Caco-2 (cell line): ENCODE measurements at regions of chr5 and their contacts with region 1.

Region 1: DNA sequence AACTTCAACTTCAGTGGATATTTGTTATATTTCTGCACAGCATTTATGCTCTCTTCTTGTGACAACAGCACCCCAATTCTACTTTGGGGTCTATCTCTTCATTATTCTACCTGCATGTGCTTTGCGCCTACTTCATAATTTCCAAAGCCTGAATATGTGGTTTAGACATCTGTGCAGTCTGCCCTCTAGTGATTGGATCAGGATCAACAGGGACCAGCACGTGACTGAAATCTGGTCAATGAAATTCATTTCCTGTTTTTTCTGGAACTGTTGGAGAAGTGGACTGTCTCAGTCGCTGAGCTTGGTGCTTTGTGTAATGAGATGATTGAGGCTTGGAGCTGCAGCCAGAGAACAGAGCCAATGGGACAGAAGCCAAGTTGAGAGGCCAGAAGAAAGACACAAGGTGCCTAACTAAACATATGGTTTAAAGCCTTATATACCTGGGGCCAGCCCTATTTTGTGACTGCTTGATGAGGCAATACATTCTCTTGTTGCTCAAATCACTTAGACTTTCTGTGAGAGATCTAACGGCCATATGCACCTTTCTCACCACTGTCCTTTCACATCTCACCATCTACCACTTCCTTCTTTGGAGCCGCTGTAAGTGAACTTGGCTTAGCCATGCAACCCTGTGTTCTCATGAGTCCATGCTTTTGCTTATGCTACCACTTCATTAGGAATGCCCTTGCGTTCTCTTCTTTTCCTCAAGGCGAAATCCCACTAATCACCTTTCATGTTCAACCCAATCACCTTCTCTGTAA is 68.8 kb upstream of the PPP2R2B start:
- DNase-seq: peak; percentile 43 to 57
- H3K4me3 ChIP-seq: no peak overlapping the region
- H3K4me3 Mint-ChIP-seq: no peak overlapping the region
- H3K27ac Mint-ChIP-seq: no peak overlapping the region
- H3K4me1 ChIP-seq: no peaks in the 10 kb centered on the region
- H3K4me1 Mint-ChIP-seq: no peaks in the 10 kb centered on the region
- H3K27me3 ChIP-seq: no peaks in the 10 kb centered on the region
- H3K27me3 Mint-ChIP-seq: no peaks in the 10 kb centered on the region
- CTCF ChIP-seq: peak; percentile 54 to 61

Region 2: DNA sequence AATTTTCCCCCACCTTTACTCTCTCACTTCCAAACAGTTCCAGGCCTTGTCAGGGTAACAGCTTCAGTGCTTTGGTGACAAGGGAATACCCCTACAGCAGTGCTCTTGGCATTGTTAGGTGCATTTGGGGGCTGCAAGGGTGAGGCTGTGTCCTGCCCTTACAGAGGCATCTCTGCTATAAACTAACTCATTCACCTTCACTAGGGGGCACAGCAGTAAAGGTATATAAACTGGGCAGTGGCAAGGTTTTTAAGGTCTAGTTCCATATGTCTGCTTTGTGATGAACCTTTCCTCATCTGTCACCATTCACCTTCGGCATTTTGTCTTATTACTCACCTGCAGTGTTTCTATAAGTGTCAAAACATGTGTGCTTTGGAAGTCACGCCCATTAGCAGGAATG is 352.3 kb before region 1 on chr5:
- CTCF ChIA-PET with region 1: no interaction called
- POLR2A ChIA-PET with region 1: no interaction called
- intact Hi-C with region 1: loop called (anchors 1 kb)
- DNase-seq: peak in 1 of 2 experiments; percentile 24
- H3K4me3 ChIP-seq: no peak overlapping the region
- H3K4me3 Mint-ChIP-seq: no peak overlapping the region
- H3K27ac Mint-ChIP-seq: no peak overlapping the region
- H3K4me1 ChIP-seq: no peaks in the 10 kb centered on the region
- H3K4me1 Mint-ChIP-seq: no peaks in the 10 kb centered on the region
- H3K27me3 ChIP-seq: no peaks in the 10 kb centered on the region
- H3K27me3 Mint-ChIP-seq: no peaks in the 10 kb centered on the region
- CTCF ChIP-seq: peak; percentile 30 to 36

Region 3: DNA sequence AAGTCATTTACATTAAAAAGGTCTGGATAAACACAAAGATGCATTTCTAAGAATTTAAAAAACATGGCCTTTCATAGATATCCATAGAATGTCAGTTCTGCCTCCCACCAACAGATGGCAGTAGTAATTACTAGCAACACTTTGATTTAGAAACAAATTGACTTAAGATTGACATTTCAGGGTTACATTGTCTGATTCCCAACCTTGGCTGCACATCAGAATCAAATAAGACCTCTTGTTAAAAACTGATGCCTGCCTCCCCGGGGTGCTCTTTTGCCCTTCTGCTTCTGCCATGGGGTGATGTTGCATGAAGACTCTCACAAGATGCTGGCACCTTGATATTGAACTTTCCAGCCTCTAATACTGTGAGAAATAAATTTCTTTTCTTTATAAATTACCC is 285.1 kb before region 1 on chr5:
- CTCF ChIA-PET with region 1: no interaction called
- POLR2A ChIA-PET with region 1: no interaction called
- intact Hi-C with region 1: loop called (anchors 5 kb)
- DNase-seq: peak in 1 of 2 experiments; percentile 32
- H3K4me3 ChIP-seq: no peak overlapping the region
- H3K4me3 Mint-ChIP-seq: no peak overlapping the region
- H3K27ac Mint-ChIP-seq: no peak overlapping the region
- H3K4me1 ChIP-seq: no peaks in the 10 kb centered on the region
- H3K4me1 Mint-ChIP-seq: no peaks in the 10 kb centered on the region
- H3K27me3 ChIP-seq: no peaks in the 10 kb centered on the region
- H3K27me3 Mint-ChIP-seq: no peaks in the 10 kb centered on the region
- CTCF ChIP-seq: peak; percentile 60 to 66

Region 4: DNA sequence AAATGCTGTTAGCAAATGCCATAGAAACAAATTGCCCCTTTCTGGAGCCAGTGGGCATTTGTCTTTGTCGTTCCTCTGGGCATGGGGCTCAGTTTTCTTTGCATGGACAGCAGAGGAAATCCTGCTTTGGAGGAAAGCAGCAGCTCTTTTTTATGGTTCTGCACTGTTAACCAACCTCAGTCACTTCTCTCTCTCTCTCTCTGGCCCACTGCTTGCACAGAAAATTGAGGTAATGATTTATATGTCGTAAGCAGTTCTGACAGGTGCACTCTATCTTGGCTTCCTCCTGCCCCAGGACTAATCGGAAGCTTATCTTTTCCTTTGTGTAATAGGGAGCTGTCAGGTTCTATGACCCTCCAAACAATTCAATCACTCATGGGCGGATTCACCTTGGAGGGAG is 271.7 kb before region 1 on chr5:
- CTCF ChIA-PET with region 1: no interaction called
- POLR2A ChIA-PET with region 1: no interaction called
- intact Hi-C with region 1: no loop called
- DNase-seq: no peak
- H3K4me3 ChIP-seq: no peak overlapping the region
- H3K4me3 Mint-ChIP-seq: no peak overlapping the region
- H3K27ac Mint-ChIP-seq: no peak overlapping the region
- H3K4me1 ChIP-seq: no peaks in the 10 kb centered on the region
- H3K4me1 Mint-ChIP-seq: no peaks in the 10 kb centered on the region
- H3K27me3 ChIP-seq: no peaks in the 10 kb centered on the region
- H3K27me3 Mint-ChIP-seq: no peaks in the 10 kb centered on the region
- CTCF ChIP-seq: no peak

Region 5: DNA sequence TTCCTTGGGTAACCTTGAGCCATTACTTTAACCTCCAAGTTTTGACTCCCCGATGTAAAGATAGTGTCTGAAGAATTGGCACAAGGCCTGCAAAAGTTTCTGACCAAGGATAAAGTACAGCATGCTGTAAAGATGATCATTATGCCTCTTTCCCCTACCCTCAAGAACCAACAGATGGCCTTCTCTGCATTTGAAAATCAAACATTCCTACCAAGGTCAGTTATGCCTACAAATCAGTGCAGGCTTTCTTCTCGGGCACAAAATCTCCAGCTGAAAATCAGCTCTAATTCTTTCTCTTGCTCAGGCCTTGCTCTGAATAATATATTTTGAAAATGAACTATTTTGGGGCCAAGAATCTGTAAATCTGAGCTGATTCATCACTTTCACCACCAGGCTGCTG is 128.5 kb before region 1 on chr5:
- CTCF ChIA-PET with region 1: no interaction called
- POLR2A ChIA-PET with region 1: no interaction called
- intact Hi-C with region 1: loop called (anchors 1 kb)
- DNase-seq: no peak
- H3K4me3 ChIP-seq: no peak overlapping the region
- H3K4me3 Mint-ChIP-seq: no peak overlapping the region
- H3K27ac Mint-ChIP-seq: no peak overlapping the region
- H3K4me1 ChIP-seq: no peaks in the 10 kb centered on the region
- H3K4me1 Mint-ChIP-seq: no peaks in the 10 kb centered on the region
- H3K27me3 ChIP-seq: no peaks in the 10 kb centered on the region
- H3K27me3 Mint-ChIP-seq: peaks cover 5% of the 10 kb centered on the region
- CTCF ChIP-seq: peak in 1 of 2 experiments; percentile 53

Region 6: DNA sequence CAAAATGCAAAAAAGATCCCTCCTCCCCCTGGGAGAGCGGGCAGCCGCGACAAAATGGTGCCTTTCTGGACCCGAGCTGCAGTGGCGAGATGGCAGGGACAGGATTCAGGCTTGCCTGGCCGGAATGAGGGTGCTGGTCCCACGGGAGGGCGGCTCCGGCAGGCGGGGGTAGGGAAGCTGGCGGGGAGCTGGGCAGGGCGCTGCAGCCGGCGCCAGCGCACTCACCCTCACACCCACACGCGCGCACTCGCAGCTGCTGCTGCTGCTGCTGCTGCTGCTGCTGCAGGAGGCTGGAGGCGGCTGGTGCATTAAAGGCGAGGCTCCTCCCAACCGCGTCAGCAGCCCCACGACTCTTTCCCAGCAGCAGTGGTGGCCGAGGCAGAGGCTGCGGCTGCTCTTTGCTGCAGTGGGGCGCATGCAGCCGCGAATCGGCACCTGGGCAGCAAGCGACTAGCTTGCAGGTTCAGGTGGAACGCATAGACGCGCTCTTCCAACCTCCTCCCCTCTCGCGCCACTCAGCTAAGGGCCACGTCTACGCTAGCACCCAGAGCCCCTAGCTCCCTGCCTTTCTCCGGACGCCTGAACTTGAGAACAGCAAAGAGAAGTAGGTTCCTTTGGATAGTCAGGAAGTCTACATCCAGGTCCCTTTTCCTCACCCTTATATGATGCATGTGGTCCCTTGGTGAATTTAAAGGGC is 68.7 kb before region 1 on chr5 and contains the start of gene PPP2R2B:
- CTCF ChIA-PET with region 1: no interaction called
- POLR2A ChIA-PET with region 1: no interaction called
- intact Hi-C with region 1: loop called (anchors 5 kb)
- DNase-seq: peak; percentile 59 to 62
- H3K4me3 ChIP-seq: peak within 1 kb of the TSS; percentile 54
- H3K4me3 Mint-ChIP-seq: peak within 1 kb of the TSS; percentile 81
- H3K27ac Mint-ChIP-seq: no peak within 1 kb of the TSS
- H3K4me1 ChIP-seq: peaks cover 6% of the 10 kb centered on the region; the same call in 1 of the 2 replicates
- H3K4me1 Mint-ChIP-seq: peaks cover 4% of the 10 kb centered on the region
- H3K27me3 ChIP-seq: no peaks in the 10 kb centered on the region
- H3K27me3 Mint-ChIP-seq: peaks cover 23% of the 10 kb centered on the region
- CTCF ChIP-seq: no peak
- total RNA-seq, gene PPP2R2B: 6.9 and 9.8 TPM in 2 replicates